ENCODE measurements at regions of chr9 and their contacts with region 1.

Region 1: GRCh38 chr9:114082017-114082762 is 4.1 kb upstream of the AMBP start:
- DNase-seq: peak; percentile 78
- ATAC-seq: peak; percentile 43
- H3K4me3 ChIP-seq: no peak overlapping the region
- H3K4me3 Mint-ChIP-seq: no peak overlapping the region
- H3K27ac ChIP-seq: no peak overlapping the region
- H3K27ac Mint-ChIP-seq: no peak overlapping the region
- H3K4me1 ChIP-seq: no peaks in the 10 kb centered on the region
- H3K4me1 Mint-ChIP-seq: no peaks in the 10 kb centered on the region
- H3K27me3 ChIP-seq: no peaks in the 10 kb centered on the region
- H3K27me3 Mint-ChIP-seq: peaks cover 17% of the 10 kb centered on the region
- CTCF ChIP-seq: peak; percentile 87

Region 2: DNA sequence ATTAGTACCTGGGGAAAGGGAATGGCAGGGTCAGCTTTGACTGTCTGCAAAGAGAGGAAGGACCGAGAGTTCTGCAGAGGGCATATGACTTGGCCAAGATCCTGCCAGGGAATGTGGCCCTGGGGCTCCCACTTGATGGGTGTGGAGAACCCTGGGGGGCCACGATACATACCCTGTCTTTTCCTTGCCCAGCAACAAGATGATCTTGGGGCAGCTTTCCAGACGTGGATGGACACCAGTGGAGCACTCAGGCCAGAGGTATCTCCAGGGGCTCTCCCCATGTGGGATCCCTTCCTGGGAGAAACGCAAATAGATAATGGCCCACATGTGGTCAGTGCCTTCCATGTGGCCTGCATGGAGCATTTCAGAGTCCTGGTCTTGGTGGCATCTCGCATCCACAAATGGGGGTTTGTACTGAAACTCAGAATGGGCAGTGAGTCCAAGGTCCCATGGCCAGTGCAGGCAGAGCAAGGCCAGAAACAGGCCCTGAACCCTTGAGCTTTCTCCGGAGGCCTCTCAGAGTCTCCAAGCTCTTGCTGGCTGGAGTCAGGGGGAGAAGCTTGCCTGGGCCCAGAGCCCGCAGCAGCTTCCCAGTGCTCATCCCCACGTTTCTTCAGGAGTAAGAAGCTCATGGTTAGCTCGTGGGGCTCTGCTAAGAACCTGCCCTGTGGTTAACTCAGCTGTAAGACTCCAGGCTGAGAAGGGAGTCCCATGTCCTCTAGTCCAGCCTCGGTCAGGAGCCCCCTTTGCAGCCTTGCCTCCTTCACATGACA is 222.4 kb after region 1 on chr9:
- CTCF ChIA-PET with region 1: interaction called, 4 read pairs
- POLR2A ChIA-PET with region 1: no interaction called
- intact Hi-C with region 1: loop called (anchors 1 kb)
- DNase-seq: no peak
- ATAC-seq: no peak
- H3K4me3 ChIP-seq: no peak overlapping the region
- H3K4me3 Mint-ChIP-seq: no peak overlapping the region
- H3K27ac ChIP-seq: no peak overlapping the region
- H3K27ac Mint-ChIP-seq: no peak overlapping the region
- H3K4me1 ChIP-seq: peaks cover 0 to 6% of the 10 kb centered on the region in 2 donors
- H3K4me1 Mint-ChIP-seq: peaks cover 3% of the 10 kb centered on the region
- H3K27me3 ChIP-seq: peaks cover 0 to 7% (median 1%) of the 10 kb centered on the region in 4 experiments
- H3K27me3 Mint-ChIP-seq: peaks cover 4% of the 10 kb centered on the region
- CTCF ChIP-seq: no peak